A549 (cell line): ENCODE measurements at regions of chr10 and their contacts with region 1.

Region 1: GRCh38 chr10:110137142-110137545 is 70.3 kb upstream of the MXI1 start:
- DNase-seq: peak; percentile 50 to 77
- ATAC-seq: peak; percentile 88 to 89
- H3K4me3 ChIP-seq: no peak overlapping the region
- H3K27ac ChIP-seq: no peak overlapping the region
- H3K4me1 ChIP-seq: no peaks in the 10 kb centered on the region
- CTCF ChIP-seq: peak; percentile 90
- EP300 ChIP-seq: no peak
- POLR2A ChIP-seq: no peak
- RAD21 ChIP-seq: peak; percentile 87 to 90

Region 2: GRCh38 chr10:109883859-109884771 is 253.0 kb before region 1 on chr10:
- CTCF ChIA-PET with region 1: interaction called, 24 read pairs
- POLR2A ChIA-PET with region 1: no interaction called
- DNase-seq: peak; percentile 89 to 92
- ATAC-seq: peak; percentile 86 to 96
- H3K4me3 ChIP-seq: no peak overlapping the region
- H3K27ac ChIP-seq: peak overlapping the region; percentile 37 to 69; a peak in 4 of 6 replicates
- H3K4me1 ChIP-seq: peaks cover 6% of the 10 kb centered on the region
- CTCF ChIP-seq: peak; percentile 91
- EP300 ChIP-seq: no peak
- POLR2A ChIP-seq: no peak
- RAD21 ChIP-seq: peak; percentile 93 to 95

Region 3: DNA sequence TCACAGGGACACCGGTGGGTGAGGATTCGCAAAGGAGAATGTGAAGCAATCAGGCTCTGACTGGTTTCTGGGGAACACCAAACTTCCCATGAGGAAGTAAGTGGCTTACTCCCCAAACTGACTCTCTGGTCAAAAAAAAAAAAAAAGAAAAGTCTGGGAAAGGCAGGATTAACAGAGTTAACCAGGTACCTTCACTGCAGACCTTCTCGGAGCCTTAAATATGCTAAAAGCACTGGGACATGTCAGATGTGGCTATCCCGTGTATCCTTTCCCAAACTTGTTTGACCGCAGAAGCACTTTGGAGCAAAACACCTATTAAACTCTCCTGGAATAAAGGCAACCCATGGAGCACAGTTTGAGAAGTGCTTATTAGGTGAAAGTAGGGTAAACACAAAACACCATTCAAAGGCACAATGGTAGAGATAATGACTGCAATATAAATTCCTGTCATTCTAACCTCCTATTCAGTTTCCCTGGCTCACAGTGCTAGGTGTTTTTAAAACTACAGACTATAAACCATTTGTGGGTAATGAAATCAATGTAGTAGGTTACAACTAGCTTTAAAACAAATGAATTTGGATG is 26.1 kb after region 1 on chr10:
- CTCF ChIA-PET with region 1: interaction called, 14 read pairs
- POLR2A ChIA-PET with region 1: no interaction called
- DNase-seq: no peak
- ATAC-seq: peak in 1 of 2 experiments; percentile 25; a peak in 2 of 6 replicates
- H3K4me3 ChIP-seq: no peak overlapping the region
- H3K27ac ChIP-seq: no peak overlapping the region
- H3K4me1 ChIP-seq: no peaks in the 10 kb centered on the region
- CTCF ChIP-seq: no peak
- EP300 ChIP-seq: no peak
- POLR2A ChIP-seq: no peak
- RAD21 ChIP-seq: no peak

Region 4: GRCh38 chr10:110273474-110273873 is 136.3 kb after region 1 on chr10:
- CTCF ChIA-PET with region 1: interaction called, 98 read pairs
- POLR2A ChIA-PET with region 1: no interaction called
- DNase-seq: peak in 1 of 2 experiments; percentile 10
- ATAC-seq: no peak
- H3K4me3 ChIP-seq: no peak overlapping the region
- H3K27ac ChIP-seq: no peak overlapping the region
- H3K4me1 ChIP-seq: no peaks in the 10 kb centered on the region
- CTCF ChIP-seq: no peak
- EP300 ChIP-seq: no peak
- POLR2A ChIP-seq: no peak
- RAD21 ChIP-seq: no peak

Region 5: DNA sequence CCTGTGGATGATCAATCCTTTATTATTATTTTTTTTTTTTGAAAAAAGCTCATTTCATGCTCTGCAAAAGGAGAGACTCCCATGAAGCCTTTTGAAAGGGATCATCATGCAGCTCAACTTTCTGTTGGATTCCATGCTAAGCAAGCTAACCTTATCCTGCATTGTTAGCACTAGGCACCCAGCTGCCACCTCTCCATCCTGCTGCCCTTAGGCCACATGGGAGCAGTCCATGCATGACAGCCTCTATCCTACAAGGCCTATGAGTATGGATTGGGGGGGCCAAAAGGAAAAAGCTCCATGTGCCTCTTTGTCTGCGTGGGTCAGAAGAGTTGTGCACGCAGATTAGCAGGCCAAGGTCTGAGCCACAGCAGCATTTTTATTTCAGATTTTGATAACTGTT is 148.4 kb after region 1 on chr10:
- CTCF ChIA-PET with region 1: interaction called, 98 read pairs
- POLR2A ChIA-PET with region 1: no interaction called
- DNase-seq: no peak
- ATAC-seq: peak; percentile 39 to 49; a peak in 2 of 6 replicates
- H3K4me3 ChIP-seq: no peak overlapping the region
- H3K27ac ChIP-seq: no peak overlapping the region
- H3K4me1 ChIP-seq: peaks cover 6% of the 10 kb centered on the region; the same call in 1 of the 3 replicates
- CTCF ChIP-seq: no peak
- EP300 ChIP-seq: no peak
- POLR2A ChIP-seq: no peak
- RAD21 ChIP-seq: no peak